ENCODE measurements at regions of chr17 and their contacts with region 1.

Region 1: DNA sequence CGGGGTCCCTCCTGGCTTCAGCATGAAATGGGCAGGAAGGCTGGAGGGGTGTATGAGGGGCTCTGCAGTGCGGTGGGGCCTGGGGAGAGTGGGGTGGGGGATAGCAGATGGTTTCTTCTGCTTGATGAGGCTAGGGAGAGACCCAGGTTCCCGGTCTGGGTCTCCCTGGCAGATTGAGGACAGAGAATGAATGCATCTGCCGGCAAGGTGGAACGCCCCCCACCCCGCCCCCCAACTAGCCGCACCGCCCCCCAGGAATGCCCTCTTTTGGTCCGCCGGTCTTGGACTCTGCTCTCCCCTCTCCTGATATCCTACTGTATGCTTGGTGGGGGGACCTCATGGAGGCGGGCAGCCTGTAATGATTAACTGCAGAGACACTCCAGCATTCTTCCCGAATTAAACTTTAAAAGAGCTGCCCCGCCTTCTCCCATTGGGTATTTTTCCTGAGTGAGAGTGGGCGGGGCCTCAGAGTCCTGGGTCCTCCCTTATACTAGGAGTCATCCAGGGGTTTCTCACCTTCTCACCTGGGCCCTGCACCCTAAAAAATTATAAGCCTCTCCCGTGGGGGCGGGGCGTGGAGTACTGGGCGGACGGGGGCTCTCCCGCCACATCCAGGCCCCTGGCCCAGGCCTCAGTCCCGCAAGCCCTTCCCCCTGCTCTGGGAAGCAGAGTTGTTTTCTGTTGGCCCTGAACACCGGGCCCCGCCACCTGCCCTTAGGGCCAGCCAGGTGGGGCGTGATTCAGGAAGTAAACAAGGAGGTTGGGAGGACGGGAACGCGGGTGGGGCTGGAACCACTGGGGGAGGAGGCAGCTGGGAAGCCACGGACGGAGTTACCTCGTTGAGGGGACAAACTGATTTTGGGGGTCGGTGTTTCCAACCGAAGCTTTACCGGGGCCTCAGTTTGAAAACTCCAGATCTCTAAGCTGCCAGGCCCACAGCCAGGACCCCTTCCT is 1.5 kb downstream of the GRB7 start:
- DNase-seq: peak; percentile 100
- H3K4me3 Mint-ChIP-seq: peak overlapping the region; percentile 77
- H3K27ac Mint-ChIP-seq: peak overlapping the region; percentile 21
- H3K4me1 Mint-ChIP-seq: peaks cover 54% of the 10 kb centered on the region
- H3K27me3 Mint-ChIP-seq: no peaks in the 10 kb centered on the region
- CTCF ChIP-seq: no peak

Region 2: GRCh38 chr17:39845052-39845846 is 106.0 kb after region 1 on chr17:
- CTCF ChIA-PET with region 1: interaction called, 25 read pairs
- intact Hi-C with region 1: no loop called
- DNase-seq: peak; percentile 81
- H3K4me3 Mint-ChIP-seq: no peak overlapping the region
- H3K27ac Mint-ChIP-seq: no peak overlapping the region
- H3K4me1 Mint-ChIP-seq: peaks cover 10% of the 10 kb centered on the region
- H3K27me3 Mint-ChIP-seq: no peaks in the 10 kb centered on the region
- CTCF ChIP-seq: no peak

Region 3: DNA sequence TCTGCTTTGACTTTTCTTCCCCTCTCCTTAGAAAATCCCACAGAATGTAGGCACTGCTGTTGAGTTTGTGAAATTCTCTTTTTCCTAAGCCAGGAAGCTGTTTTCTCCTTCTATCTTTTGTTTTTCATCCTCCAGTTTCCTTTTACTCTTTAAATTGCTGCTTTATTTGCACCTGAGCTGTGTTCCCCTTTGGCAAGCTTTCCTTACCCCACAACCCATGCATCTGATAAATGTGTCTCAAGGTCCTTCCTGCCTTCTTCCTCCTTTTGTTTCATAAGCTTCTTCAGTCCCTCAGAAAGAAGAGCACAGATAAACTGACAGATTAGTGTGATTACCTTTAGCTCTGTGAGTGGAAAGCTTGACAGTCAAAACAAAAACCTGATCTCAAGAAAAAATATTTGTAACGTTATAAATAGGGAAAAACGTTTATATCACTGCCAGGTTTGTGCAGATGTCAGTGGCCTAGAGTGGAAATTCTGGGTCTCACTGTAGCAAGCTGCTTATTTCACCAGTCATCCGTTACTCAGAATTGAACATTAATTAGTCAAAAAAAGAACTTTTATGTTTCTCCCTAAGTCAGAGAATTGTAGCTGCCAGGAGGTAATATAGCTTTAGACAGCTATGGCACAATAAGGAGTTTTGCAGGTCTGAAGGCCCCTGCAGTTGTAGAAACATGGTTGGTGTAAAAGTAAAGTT is 155.6 kb after region 1 on chr17:
- CTCF ChIA-PET with region 1: interaction called, 679 read pairs
- intact Hi-C with region 1: no loop called
- DNase-seq: peak; percentile 63
- H3K4me3 Mint-ChIP-seq: no peak overlapping the region
- H3K27ac Mint-ChIP-seq: no peak overlapping the region
- H3K4me1 Mint-ChIP-seq: peaks cover 23% of the 10 kb centered on the region
- H3K27me3 Mint-ChIP-seq: peaks cover 15% of the 10 kb centered on the region
- CTCF ChIP-seq: no peak

Region 4: GRCh38 chr17:39916918-39917317 is 177.7 kb after region 1 on chr17:
- CTCF ChIA-PET with region 1: interaction called, 275 read pairs
- intact Hi-C with region 1: no loop called
- DNase-seq: peak; percentile 94
- H3K4me3 Mint-ChIP-seq: no peak overlapping the region
- H3K27ac Mint-ChIP-seq: no peak overlapping the region
- H3K4me1 Mint-ChIP-seq: peaks cover 24% of the 10 kb centered on the region
- H3K27me3 Mint-ChIP-seq: no peaks in the 10 kb centered on the region
- CTCF ChIP-seq: no peak

Region 5: DNA sequence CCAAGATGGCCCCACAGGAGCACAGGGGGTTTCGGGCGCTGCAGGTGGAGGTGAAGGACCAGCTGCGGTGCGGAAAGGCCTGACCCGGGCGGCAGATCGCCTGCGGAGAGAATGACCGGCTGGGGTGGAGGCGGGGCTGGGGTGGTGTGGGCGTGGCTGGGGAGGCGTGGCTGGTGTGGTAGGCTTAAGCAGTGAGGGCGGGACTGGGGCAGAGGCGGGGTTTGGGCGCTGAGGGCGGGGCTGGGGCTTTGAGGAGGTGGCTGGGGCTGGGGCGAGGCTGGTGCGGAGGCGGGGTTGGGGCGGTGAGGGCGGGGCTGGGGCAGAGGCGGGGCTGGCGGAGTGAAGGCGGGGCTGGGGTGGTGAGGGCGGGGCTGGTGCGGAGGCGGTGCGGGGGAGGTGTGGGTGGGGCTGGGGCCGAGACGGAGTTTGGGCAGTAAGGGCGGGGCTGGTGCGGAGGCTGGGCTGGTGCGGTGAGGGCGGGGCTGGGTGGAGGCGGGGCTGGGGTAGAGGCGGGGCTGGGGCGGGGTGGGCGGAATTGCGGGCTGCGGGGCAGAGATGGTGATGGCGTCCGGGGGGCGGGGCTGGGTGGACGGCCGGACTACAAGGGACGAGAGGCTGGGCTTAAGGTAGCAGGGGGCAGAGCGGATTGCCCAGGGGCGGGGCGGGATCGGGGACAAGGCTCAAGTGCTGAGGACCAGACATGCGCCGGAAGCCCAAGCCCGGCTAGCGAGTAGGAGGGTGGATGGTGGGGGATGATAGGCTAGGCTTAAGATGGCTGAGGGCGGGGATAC is 213.7 kb after region 1 on chr17:
- CTCF ChIA-PET with region 1: interaction called, 1,335 read pairs
- intact Hi-C with region 1: loop called (anchors 1 kb)
- DNase-seq: peak; percentile 100
- H3K4me3 Mint-ChIP-seq: peak overlapping the region; percentile 58
- H3K27ac Mint-ChIP-seq: peak overlapping the region; percentile 18
- H3K4me1 Mint-ChIP-seq: peaks cover 42% of the 10 kb centered on the region
- H3K27me3 Mint-ChIP-seq: peaks cover 15% of the 10 kb centered on the region
- CTCF ChIP-seq: no peak

Region 6: GRCh38 chr17:39996800-39997199 is 257.6 kb after region 1 on chr17:
- CTCF ChIA-PET with region 1: interaction called, 11 read pairs
- intact Hi-C with region 1: no loop called
- DNase-seq: no peak
- H3K4me3 Mint-ChIP-seq: no peak overlapping the region
- H3K27ac Mint-ChIP-seq: no peak overlapping the region
- H3K4me1 Mint-ChIP-seq: no peaks in the 10 kb centered on the region
- H3K27me3 Mint-ChIP-seq: no peaks in the 10 kb centered on the region
- CTCF ChIP-seq: no peak

Region 7: GRCh38 chr17:40430272-40431230 is 691.3 kb after region 1 on chr17:
- CTCF ChIA-PET with region 1: no interaction called
- intact Hi-C with region 1: no loop called
- DNase-seq: no peak
- H3K4me3 Mint-ChIP-seq: no peak overlapping the region
- H3K27ac Mint-ChIP-seq: no peak overlapping the region
- H3K4me1 Mint-ChIP-seq: no peaks in the 10 kb centered on the region
- H3K27me3 Mint-ChIP-seq: peaks cover 54% of the 10 kb centered on the region
- CTCF ChIP-seq: no peak

Measured in Calu3 (cell line).